Breast epithelium (tissue), 4 donors: ENCODE measurements at regions of chr7 and their contacts with region 1.

Region 1: GRCh38 chr7:19117870-19118608 is 603 bp upstream of the TWIST1 start:
- DNase-seq: no peak
- H3K4me3 ChIP-seq: peak overlapping the region; percentile 60 to 85 (median 84)
- H3K27ac ChIP-seq: peak overlapping the region; percentile 37 to 92
- H3K4me1 ChIP-seq: no peaks in the 10 kb centered on the region
- H3K27me3 ChIP-seq: peaks cover 0 to 73% of the 10 kb centered on the region in 2 donors
- CTCF ChIP-seq: no peak
- POLR2A ChIP-seq: no peak

Region 2: GRCh38 chr7:19133886-19134285 is 15.8 kb after region 1 on chr7:
- intact Hi-C with region 1: loop called (anchors 1 kb)
- DNase-seq: no peak
- H3K4me3 ChIP-seq: no peak overlapping the region
- H3K27ac ChIP-seq: no peak overlapping the region
- H3K4me1 ChIP-seq: no peaks in the 10 kb centered on the region
- H3K27me3 ChIP-seq: no peaks in the 10 kb centered on the region
- CTCF ChIP-seq: no peak
- POLR2A ChIP-seq: no peak